CD14-positive monocyte (primary cell): ENCODE measurements at regions of chr1 and their contacts with region 1.

Region 1: GRCh38 chr1:20661207-20662109 is at the start of gene DDOST:
- DNase-seq: peak; percentile 94 to 98 (median 96)
- H3K4me3 ChIP-seq: peak within 1 kb of the TSS; percentile 67 to 99 (median 96)
- H3K4me3 Mint-ChIP-seq: peak within 1 kb of the TSS; percentile 96
- H3K27ac ChIP-seq: peak within 1 kb of the TSS; percentile 58 to 94
- H3K27ac Mint-ChIP-seq: peak within 1 kb of the TSS; percentile 89 to 96 (median 94)
- H3K4me1 ChIP-seq: peaks cover 20 to 24% of the 10 kb centered on the region in 2 donors
- H3K4me1 Mint-ChIP-seq: peaks cover 31% of the 10 kb centered on the region
- H3K27me3 ChIP-seq: no peaks in the 10 kb centered on the region
- H3K27me3 Mint-ChIP-seq: no peaks in the 10 kb centered on the region
- CTCF ChIP-seq: peak; percentile 16
- polyA plus RNA-seq, gene DDOST: 125 to 245 (median 241) TPM

Region 2: DNA sequence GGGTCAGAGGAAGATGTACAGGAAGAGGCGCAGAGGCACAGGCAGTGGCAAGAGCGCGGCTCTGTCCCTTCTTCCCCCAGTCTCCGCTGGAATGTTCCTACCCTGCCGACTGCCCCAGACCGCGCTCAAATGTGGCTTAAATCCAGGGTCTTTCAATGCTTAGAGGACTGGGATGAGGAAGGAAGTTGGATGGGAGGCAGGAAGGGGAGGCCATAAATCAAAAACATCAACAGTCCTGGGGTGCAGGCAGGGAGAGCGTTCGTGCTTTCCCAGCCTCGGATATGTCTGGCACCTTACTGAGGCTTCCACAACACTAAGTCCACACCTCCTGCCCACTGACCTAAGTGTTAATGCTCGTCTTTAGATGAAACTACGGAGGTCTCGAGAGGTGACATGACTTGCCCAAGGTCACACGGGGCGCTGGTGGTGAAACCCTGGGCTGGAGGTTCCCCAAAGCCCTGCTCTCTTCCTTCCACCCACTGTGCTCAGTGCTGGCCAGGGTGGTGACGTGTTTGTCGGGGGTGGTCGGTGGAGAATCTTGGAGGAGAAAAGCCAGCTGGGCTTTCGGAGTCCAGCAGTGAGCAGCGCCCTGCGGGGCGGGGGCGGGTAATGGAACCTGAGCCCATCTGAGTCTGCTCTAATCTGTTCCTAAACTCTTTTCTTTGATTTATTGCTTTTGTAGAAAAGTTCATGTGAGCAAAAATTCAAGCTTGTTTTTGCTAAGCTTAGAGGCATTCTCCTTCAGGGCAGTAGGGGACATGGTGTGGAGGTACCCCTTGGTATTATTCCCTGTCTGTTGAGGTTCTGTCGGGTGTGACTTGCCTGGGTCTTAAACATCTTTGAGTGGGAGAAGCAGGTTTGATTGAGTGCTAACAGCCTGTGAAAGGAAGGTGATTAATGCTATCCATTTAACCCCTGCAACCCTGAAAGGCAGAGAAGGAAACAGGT is 71.9 kb before region 1 on chr1:
- intact Hi-C with region 1: no loop called
- DNase-seq: peak; percentile 77 to 88 (median 78)
- H3K4me3 ChIP-seq: peak overlapping the region; percentile 60 to 84 (median 79)
- H3K4me3 Mint-ChIP-seq: peak overlapping the region; percentile 91
- H3K27ac ChIP-seq: peak overlapping the region; percentile 93 to 98
- H3K27ac Mint-ChIP-seq: peak overlapping the region; percentile 95 to 99 (median 97)
- H3K4me1 ChIP-seq: peaks cover 48 to 63% of the 10 kb centered on the region in 2 donors
- H3K4me1 Mint-ChIP-seq: peaks cover 76% of the 10 kb centered on the region
- H3K27me3 ChIP-seq: no peaks in the 10 kb centered on the region
- H3K27me3 Mint-ChIP-seq: peaks cover 0 to 4% (median 1%) of the 10 kb centered on the region in 3 donors
- CTCF ChIP-seq: no peak

Region 3: GRCh38 chr1:20633190-20634064 is 28.0 kb before region 1 on chr1 and contains the start of gene PINK1:
- intact Hi-C with region 1: loop called in 1 of 2 experiments (anchors 2 kb)
- DNase-seq: peak; percentile 70 to 82 (median 79)
- H3K4me3 ChIP-seq: peak within 1 kb of the TSS; percentile 54 to 96 (median 92)
- H3K4me3 Mint-ChIP-seq: peak within 1 kb of the TSS; percentile 80 to 89
- H3K27ac ChIP-seq: peak within 1 kb of the TSS; percentile 21 to 81
- H3K27ac Mint-ChIP-seq: peak within 1 kb of the TSS; percentile 19 to 87 (median 81)
- H3K4me1 ChIP-seq: peaks cover 15 to 16% of the 10 kb centered on the region in 2 donors
- H3K4me1 Mint-ChIP-seq: peaks cover 19% of the 10 kb centered on the region
- H3K27me3 ChIP-seq: no peaks in the 10 kb centered on the region
- H3K27me3 Mint-ChIP-seq: peaks cover 0 to 2% (median 1%) of the 10 kb centered on the region in 3 donors
- CTCF ChIP-seq: peak; percentile 99
- polyA plus RNA-seq, gene PINK1: 21.6 to 32.7 (median 24.0) TPM